Astrocyte of the cerebellum (primary cell): ENCODE measurements at regions of chr17 and their contacts with region 1.

Region 1: GRCh38 chr17:55513885-55514591 is 2.8 kb upstream of the SMIM36 start:
- DNase-seq: peak; percentile 49
- H3K4me3 ChIP-seq: no peak overlapping the region
- CTCF ChIP-seq: peak; percentile 94

Region 2: GRCh38 chr17:55303701-55304145 is 210.3 kb before region 1 on chr17:
- in situ Hi-C with region 1: loop called (anchors 25 kb)
- DNase-seq: no peak
- H3K4me3 ChIP-seq: no peak overlapping the region
- CTCF ChIP-seq: no peak

Region 3: DNA sequence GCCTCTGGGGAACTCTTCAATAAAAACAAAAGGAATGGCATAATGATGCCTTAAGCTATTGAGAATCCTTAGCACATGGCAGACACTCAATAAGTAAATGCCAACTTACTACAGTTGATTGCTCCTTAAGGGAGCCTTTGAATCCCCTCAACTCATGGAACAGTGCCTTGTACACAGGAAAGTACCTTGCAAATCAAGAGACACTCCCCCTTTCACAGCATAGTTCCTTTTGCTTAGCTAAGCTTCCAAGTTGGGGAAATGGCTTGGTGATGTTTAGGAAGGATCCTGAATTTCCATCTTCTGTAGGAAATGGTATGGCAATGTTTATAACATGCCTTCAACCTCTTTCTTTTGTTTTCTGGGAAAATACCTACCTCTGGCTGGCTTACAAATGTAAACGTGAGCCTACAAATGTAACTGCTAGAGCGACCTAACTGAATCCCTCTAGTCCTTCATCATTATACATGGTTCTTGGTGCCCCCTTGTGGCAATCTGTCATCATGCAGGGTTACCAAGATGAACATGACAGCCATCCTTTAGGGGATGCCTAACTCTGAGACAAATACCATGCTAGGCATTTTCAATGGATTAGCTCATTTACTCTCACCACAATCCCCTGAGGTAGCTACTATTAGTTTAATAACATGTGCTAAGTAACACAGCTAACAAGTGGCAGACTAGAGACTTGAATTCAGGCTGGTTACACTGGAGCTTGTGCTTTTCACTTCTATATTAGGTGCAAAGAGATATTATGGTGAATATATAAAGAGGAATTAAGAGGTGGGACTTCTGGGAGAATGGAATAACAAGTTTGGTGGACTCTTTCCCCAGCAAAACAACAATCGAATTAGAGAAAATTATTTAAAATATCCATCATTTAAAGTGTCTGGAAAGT is 157.4 kb before region 1 on chr17:
- in situ Hi-C with region 1: loop called (anchors 5 kb)
- DNase-seq: peak; percentile 43
- H3K4me3 ChIP-seq: no peak overlapping the region
- CTCF ChIP-seq: peak; percentile 82

Region 4: GRCh38 chr17:55444471-55445441 is 69.3 kb before region 1 on chr17:
- in situ Hi-C with region 1: loop called (anchors 5 kb)
- DNase-seq: no peak
- H3K4me3 ChIP-seq: no peak overlapping the region
- CTCF ChIP-seq: no peak

Region 5: GRCh38 chr17:55607731-55608341 is 93.8 kb after region 1 on chr17:
- in situ Hi-C with region 1: loop called (anchors 5 kb)
- DNase-seq: peak; percentile 3
- H3K4me3 ChIP-seq: no peak overlapping the region
- CTCF ChIP-seq: no peak